Caco-2 (cell line): ENCODE measurements at regions of chr13 and their contacts with region 1.

Region 1: DNA sequence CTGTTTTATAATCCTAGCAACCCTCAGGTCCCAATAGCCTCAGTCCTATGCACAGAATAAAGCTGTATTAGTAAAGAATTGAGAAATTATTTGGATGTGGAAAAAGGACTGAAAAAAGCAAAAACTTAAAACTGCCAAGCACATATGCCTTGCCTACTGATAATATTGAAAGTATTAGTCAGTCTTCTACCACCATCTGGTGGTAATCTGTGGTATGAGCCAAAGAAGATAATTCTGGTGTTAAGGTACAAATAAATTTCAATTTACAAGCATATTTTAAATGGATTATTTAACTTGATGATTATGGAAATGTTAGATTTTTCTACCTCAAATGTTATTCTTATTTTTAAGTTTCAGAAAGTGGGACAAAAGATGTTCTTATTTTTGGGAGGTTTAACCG is 460.3 kb upstream of the KLHL1 start:
- DNase-seq: peak in 1 of 2 experiments; percentile 59
- H3K4me3 ChIP-seq: no peak overlapping the region
- H3K4me3 Mint-ChIP-seq: no peak overlapping the region
- H3K27ac Mint-ChIP-seq: no peak overlapping the region
- H3K4me1 ChIP-seq: no peaks in the 10 kb centered on the region
- H3K4me1 Mint-ChIP-seq: no peaks in the 10 kb centered on the region
- H3K27me3 ChIP-seq: no peaks in the 10 kb centered on the region
- H3K27me3 Mint-ChIP-seq: no peaks in the 10 kb centered on the region
- CTCF ChIP-seq: peak; percentile 63 to 86

Region 2: DNA sequence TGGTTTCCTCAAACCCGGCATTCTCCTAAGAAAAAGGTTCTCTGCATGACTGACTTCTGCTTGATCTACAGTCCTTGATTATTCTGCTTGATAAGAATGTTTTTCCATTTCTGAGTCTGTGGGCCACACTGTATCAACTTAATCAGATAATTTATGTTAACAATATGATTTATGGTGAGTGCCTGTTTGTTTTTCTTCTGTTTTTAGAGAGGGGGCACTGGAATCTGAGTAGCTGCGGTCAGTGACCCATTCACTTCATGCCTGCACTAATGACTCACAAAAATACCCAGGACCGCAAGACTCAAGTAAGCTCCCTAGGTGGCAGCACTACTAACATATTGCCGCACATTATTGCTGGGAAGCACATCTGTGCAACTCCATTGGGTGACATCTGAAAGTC is 1003.2 kb before region 1 on chr13:
- CTCF ChIA-PET with region 1: no interaction called
- POLR2A ChIA-PET with region 1: no interaction called
- intact Hi-C with region 1: loop called (anchors 10 kb)
- DNase-seq: peak; percentile 54 to 58
- H3K4me3 ChIP-seq: no peak overlapping the region
- H3K4me3 Mint-ChIP-seq: no peak overlapping the region
- H3K27ac Mint-ChIP-seq: no peak overlapping the region
- H3K4me1 ChIP-seq: no peaks in the 10 kb centered on the region
- H3K4me1 Mint-ChIP-seq: no peaks in the 10 kb centered on the region
- H3K27me3 ChIP-seq: no peaks in the 10 kb centered on the region
- H3K27me3 Mint-ChIP-seq: no peaks in the 10 kb centered on the region
- CTCF ChIP-seq: peak; percentile 52 to 63

Region 3: GRCh38 chr13:69857183-69857821 is 711.3 kb before region 1 on chr13:
- CTCF ChIA-PET with region 1: no interaction called
- POLR2A ChIA-PET with region 1: no interaction called
- intact Hi-C with region 1: loop called (anchors 2 kb)
- DNase-seq: peak in 1 of 2 experiments; percentile 54
- H3K4me3 ChIP-seq: no peak overlapping the region
- H3K4me3 Mint-ChIP-seq: peak overlapping the region; percentile 1
- H3K27ac Mint-ChIP-seq: peak overlapping the region; percentile 6
- H3K4me1 ChIP-seq: peaks cover 13% of the 10 kb centered on the region
- H3K4me1 Mint-ChIP-seq: peaks cover 11% of the 10 kb centered on the region
- H3K27me3 ChIP-seq: no peaks in the 10 kb centered on the region
- H3K27me3 Mint-ChIP-seq: no peaks in the 10 kb centered on the region
- CTCF ChIP-seq: peak; percentile 53 to 55

Region 4: GRCh38 chr13:70098669-70099068 is 469.9 kb before region 1 on chr13:
- CTCF ChIA-PET with region 1: no interaction called
- POLR2A ChIA-PET with region 1: no interaction called
- intact Hi-C with region 1: loop called (anchors 1 kb)
- DNase-seq: peak in 1 of 2 experiments; percentile 7
- H3K4me3 ChIP-seq: no peak overlapping the region
- H3K4me3 Mint-ChIP-seq: no peak overlapping the region
- H3K27ac Mint-ChIP-seq: no peak overlapping the region
- H3K4me1 ChIP-seq: no peaks in the 10 kb centered on the region
- H3K4me1 Mint-ChIP-seq: no peaks in the 10 kb centered on the region
- H3K27me3 ChIP-seq: no peaks in the 10 kb centered on the region
- H3K27me3 Mint-ChIP-seq: no peaks in the 10 kb centered on the region
- CTCF ChIP-seq: peak; percentile 46 to 47

Region 5: DNA sequence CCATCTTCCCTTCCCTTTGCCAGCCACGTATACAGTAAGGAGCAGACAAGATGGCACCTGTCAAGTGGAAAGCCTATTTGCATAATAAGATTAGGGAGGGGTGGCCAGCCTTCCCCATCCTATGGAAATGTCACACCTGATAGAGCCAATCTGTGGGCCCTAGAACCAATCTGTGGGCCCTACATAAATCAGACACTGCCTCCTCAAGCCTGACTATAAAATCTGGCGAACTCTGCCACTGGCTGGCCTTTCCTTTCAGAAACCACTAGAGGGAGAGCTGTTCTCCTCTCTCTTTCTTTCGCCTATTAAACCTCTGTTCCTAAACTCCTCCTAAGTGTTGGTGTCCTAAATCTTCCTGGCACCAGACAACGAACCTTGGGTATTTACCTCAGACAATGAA is 228.8 kb before region 1 on chr13:
- CTCF ChIA-PET with region 1: no interaction called
- POLR2A ChIA-PET with region 1: no interaction called
- intact Hi-C with region 1: loop called (anchors 1 kb)
- DNase-seq: peak in 1 of 2 experiments; percentile 55
- H3K4me3 ChIP-seq: no peak overlapping the region
- H3K4me3 Mint-ChIP-seq: no peak overlapping the region
- H3K27ac Mint-ChIP-seq: no peak overlapping the region
- H3K4me1 ChIP-seq: no peaks in the 10 kb centered on the region
- H3K4me1 Mint-ChIP-seq: no peaks in the 10 kb centered on the region
- H3K27me3 ChIP-seq: no peaks in the 10 kb centered on the region
- H3K27me3 Mint-ChIP-seq: peaks cover 3% of the 10 kb centered on the region
- CTCF ChIP-seq: peak; percentile 65 to 76

Region 6: GRCh38 chr13:71368336-71368735 is 799.8 kb after region 1 on chr13:
- CTCF ChIA-PET with region 1: no interaction called
- POLR2A ChIA-PET with region 1: no interaction called
- intact Hi-C with region 1: no loop called
- DNase-seq: no peak
- H3K4me3 ChIP-seq: no peak overlapping the region
- H3K4me3 Mint-ChIP-seq: no peak overlapping the region
- H3K27ac Mint-ChIP-seq: no peak overlapping the region
- H3K4me1 ChIP-seq: no peaks in the 10 kb centered on the region
- H3K4me1 Mint-ChIP-seq: no peaks in the 10 kb centered on the region
- H3K27me3 ChIP-seq: no peaks in the 10 kb centered on the region
- H3K27me3 Mint-ChIP-seq: no peaks in the 10 kb centered on the region
- CTCF ChIP-seq: no peak